Heart left ventricle (tissue), 16 donors: ENCODE measurements at regions of chr5 and their contacts with region 1.

Region 1: DNA sequence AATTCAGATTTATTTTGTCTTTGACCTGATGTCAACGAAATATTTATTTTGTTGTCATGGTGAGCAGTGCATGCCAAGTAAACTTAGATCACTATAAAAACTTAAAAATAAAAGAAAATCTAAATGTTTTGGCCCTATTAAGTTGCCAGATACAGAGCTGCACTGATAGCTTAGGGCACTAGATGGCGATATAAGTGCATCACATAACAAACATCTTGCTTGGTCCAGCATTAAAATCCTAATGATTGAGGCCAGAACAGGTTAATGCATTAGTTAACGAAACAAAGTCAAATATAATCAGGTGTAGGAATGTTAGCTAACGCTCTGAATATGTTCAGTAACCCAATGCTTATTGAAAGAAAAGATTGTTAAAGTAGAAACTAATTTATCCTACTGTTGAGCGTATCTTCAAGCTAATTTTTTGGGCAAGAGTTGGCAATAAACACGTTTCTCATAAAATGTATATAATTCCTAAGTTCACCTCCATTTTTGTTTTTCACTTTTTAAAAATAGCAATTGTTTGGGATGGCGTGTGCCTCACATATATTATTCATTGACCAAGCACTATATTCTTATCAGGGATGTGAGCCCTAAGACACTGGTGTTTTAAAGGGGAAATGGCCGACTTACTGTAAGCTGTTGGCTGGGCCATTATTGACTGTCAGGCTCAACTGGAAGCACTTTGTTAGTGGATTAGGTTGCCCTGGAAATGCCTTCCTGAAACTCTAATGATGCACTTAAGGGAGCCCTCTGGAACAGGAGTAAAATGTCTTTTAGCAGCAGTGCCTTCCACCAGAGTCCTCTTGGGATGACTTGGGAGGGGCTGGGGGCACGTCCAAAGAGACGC is 33.3 kb downstream of the KCTD16 start:
- DNase-seq: no peak
- ATAC-seq: peak in 3 of 4 donors; percentile 52 to 74 (median 56)
- H3K4me3 ChIP-seq: no peak overlapping the region
- H3K27ac ChIP-seq: no peak overlapping the region
- H3K4me1 ChIP-seq: peaks cover 0 to 16% (median 5%) of the 10 kb centered on the region in 12 donors
- H3K27me3 ChIP-seq: peaks cover 9 to 71% (median 36%) of the 10 kb centered on the region in 9 donors
- CTCF ChIP-seq: peak; percentile 76 to 97 (median 87)
- POLR2A ChIP-seq: no peak

Region 2: DNA sequence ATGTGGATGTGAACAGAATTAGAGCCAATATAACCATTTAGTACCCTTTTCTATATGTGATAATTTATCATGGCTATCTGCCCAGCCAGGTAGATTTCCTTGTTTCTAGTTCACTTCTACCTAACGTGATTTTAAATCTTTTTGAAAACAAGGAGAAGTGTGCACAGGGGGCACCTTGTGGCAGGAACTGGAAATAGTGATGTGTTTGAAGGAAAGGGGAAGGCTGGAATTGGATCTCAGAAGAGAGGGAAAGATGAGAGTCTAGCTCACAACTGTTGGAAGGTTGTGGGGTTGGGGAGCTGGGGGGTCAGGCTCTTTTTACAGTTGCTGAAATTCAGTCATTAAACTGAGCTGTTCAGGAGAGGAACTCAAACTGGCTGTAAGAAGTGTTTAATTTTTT is 186.2 kb after region 1 on chr5:
- intact Hi-C with region 1: loop called in 2 of 10 experiments (anchors 10 kb)
- DNase-seq: no peak
- ATAC-seq: no peak
- H3K4me3 ChIP-seq: no peak overlapping the region
- H3K27ac ChIP-seq: no peak overlapping the region
- H3K4me1 ChIP-seq: no peaks in the 10 kb centered on the region
- H3K27me3 ChIP-seq: no peaks in the 10 kb centered on the region
- CTCF ChIP-seq: peak in 1 of 12 donors; percentile 24
- POLR2A ChIP-seq: no peak

Region 3: GRCh38 chr5:145347026-145347616 is 1143.1 kb after region 1 on chr5:
- intact Hi-C with region 1: loop called in 1 of 10 experiments (anchors 10 kb)
- DNase-seq: no peak
- ATAC-seq: peak in 1 of 4 donors; percentile 47
- H3K4me3 ChIP-seq: no peak overlapping the region
- H3K27ac ChIP-seq: no peak overlapping the region
- H3K4me1 ChIP-seq: no peaks in the 10 kb centered on the region
- H3K27me3 ChIP-seq: no peaks in the 10 kb centered on the region
- CTCF ChIP-seq: peak in 10 of 12 donors; percentile 12 to 46 (median 37)
- POLR2A ChIP-seq: no peak

Region 4: GRCh38 chr5:145811834-145812625 is 1608.1 kb after region 1 on chr5:
- intact Hi-C with region 1: loop called in 1 of 10 experiments (anchors 10 kb)
- DNase-seq: no peak
- ATAC-seq: peak in 3 of 4 donors; percentile 76 to 82 (median 81)
- H3K4me3 ChIP-seq: no peak overlapping the region
- H3K27ac ChIP-seq: no peak overlapping the region
- H3K4me1 ChIP-seq: peaks cover 0 to 9% (median 0%) of the 10 kb centered on the region in 12 donors
- H3K27me3 ChIP-seq: no peaks in the 10 kb centered on the region
- CTCF ChIP-seq: peak; percentile 6 to 50 (median 20)
- POLR2A ChIP-seq: no peak

Region 5: DNA sequence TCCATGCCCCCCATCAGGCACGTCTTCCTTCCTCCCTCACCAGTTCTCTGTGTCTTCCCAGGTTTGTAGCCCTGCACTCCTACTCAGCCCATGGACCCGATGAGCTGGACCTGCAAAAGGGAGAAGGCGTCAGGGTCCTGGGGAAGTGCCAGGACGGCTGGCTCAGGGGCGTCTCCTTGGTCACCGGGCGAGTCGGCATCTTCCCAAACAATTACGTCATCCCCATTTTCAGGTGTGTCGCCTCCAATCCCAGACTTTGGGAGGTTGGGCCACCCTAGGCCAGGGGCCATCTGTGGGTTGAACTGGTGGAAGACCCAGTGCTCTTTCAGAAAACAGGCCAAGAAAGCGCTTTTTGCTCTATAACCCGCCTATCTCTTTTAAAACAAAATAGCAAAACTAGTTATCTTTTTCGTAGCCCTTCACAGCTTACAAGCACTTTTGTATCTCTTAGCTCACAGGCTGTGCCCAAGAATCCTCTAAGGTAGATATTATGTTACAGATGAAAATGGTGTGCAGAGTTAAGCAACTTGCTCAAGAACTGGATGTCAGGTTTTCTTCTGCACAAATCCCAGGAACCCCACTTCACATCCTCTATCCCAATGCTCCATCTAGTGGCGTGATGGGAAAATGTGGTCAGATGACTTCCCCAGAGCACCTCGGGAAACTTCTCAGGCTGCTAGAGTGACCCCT is 1845.2 kb after region 1 on chr5:
- intact Hi-C with region 1: loop called in 8 of 10 experiments (anchors 5 to 10 kb)
- DNase-seq: peak in 3 of 5 donors; percentile 27 to 36 (median 32)
- ATAC-seq: peak in 3 of 4 donors; percentile 62 to 70 (median 69)
- H3K4me3 ChIP-seq: no peak overlapping the region
- H3K27ac ChIP-seq: no peak overlapping the region
- H3K4me1 ChIP-seq: peaks cover 0 to 7% (median 0%) of the 10 kb centered on the region in 12 donors
- H3K27me3 ChIP-seq: no peaks in the 10 kb centered on the region
- CTCF ChIP-seq: peak; percentile 46 to 76 (median 69)
- POLR2A ChIP-seq: no peak

Region 6: DNA sequence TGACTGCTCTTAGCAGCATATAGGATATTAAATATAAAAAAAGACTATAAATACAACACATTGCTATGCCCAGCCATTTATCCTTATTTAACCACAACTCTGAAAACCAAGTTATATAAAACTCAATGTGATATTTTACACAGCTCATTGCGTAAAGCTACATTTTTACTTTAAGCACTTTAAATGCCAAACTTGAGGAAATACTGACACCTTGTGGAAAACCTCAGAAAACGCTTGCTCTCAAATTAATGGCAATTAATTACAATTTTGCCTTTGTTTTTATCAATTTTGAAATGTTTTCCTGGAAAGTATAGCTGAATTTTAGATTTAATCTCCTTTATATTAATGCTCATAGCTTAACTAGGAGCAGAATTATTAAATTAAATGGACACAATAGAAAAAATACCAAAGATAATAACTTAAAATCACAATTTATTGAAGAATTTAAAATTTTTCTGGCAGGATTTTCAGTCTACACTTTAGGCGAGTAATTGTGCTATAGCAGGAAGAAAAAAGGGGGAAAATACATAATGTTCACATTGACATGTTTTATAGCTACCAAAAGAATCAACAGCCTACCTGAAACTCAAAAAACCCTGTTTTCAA is 1926.6 kb after region 1 on chr5:
- intact Hi-C with region 1: loop called in 6 of 10 experiments (anchors 5 to 10 kb)
- DNase-seq: no peak
- ATAC-seq: peak in 1 of 4 donors; percentile 20
- H3K4me3 ChIP-seq: no peak overlapping the region
- H3K27ac ChIP-seq: no peak overlapping the region
- H3K4me1 ChIP-seq: no peaks in the 10 kb centered on the region
- H3K27me3 ChIP-seq: no peaks in the 10 kb centered on the region
- CTCF ChIP-seq: peak; percentile 33 to 74 (median 58)
- POLR2A ChIP-seq: no peak